ENCODE measurements at regions of chr2 and their contacts with region 1.

Region 1: DNA sequence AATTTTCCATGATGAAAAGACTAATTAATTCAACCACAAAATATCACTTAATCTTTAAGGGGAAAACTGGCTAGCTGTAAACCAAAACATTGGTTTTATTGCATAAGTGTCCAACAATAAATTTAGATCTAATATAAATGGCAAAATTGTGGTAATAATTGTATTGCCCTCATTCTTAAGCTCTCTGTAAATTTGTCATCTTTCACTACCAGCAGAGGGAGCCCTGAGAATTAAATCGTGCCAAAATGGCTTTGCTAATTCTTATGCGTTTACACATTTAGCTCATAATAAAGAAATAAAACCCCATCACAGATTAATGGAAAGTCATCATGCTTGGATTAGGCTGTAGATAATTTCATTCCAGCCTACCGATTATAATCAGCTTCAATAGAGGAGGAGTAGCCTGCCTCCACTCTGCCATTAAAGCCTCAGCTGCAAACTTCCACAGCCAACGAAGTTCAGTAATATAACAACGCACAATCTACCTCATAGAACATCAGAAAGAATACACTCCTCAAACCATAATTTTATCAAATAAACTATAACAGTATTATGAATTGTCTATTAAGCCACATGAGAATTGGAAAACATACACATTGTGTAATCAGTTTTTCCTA is 70.0 kb upstream of the ATP5MC3 start:
- DNase-seq: peak in 2 of 35 experiments; percentile 2 to 44
- ATAC-seq: no peak
- H3K4me3 ChIP-seq: no peak overlapping the region
- H3K4me3 Mint-ChIP-seq: no peak overlapping the region
- H3K27ac ChIP-seq: no peak overlapping the region
- H3K27ac Mint-ChIP-seq: no peak overlapping the region
- H3K4me1 ChIP-seq: no peaks in the 10 kb centered on the region
- H3K4me1 Mint-ChIP-seq: no peaks in the 10 kb centered on the region
- H3K27me3 ChIP-seq: peaks cover 0 to 2% of the 10 kb centered on the region in 2 experiments
- H3K27me3 Mint-ChIP-seq: peaks cover 23 to 31% of the 10 kb centered on the region in 2 donors

Region 2: DNA sequence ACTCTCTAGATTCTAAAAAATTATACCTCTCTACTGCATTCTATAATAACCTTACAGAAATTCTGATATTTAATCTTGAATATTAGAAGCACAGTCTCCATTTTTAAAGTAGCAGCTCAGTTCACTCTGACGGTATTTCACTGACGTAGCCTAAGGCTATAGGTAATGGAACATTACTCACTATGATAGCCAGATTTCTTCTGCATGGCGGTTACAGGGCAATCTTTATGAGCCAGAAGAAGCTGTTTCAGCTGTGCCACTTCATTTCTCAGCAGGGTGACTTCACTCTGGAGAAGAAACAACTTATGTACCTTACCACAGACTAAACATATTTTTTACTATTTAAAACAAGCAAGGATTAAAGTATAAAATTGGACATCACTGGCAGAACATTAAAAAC is 171.1 kb before region 1 on chr2:
- CTCF ChIA-PET with region 1: no interaction called
- POLR2A ChIA-PET with region 1: no interaction called
- DNase-seq: no peak
- ATAC-seq: no peak
- H3K4me3 ChIP-seq: no peak overlapping the region
- H3K4me3 Mint-ChIP-seq: no peak overlapping the region
- H3K27ac ChIP-seq: no peak overlapping the region
- H3K27ac Mint-ChIP-seq: no peak overlapping the region
- H3K4me1 ChIP-seq: no peaks in the 10 kb centered on the region
- H3K4me1 Mint-ChIP-seq: no peaks in the 10 kb centered on the region
- H3K27me3 ChIP-seq: no peaks in the 10 kb centered on the region
- H3K27me3 Mint-ChIP-seq: no peaks in the 10 kb centered on the region

Region 3: GRCh38 chr2:175318542-175318941 is 67.0 kb after region 1 on chr2:
- CTCF ChIA-PET with region 1: no interaction called
- POLR2A ChIA-PET with region 1: no interaction called
- DNase-seq: no peak
- ATAC-seq: no peak
- H3K4me3 ChIP-seq: no peak overlapping the region
- H3K4me3 Mint-ChIP-seq: no peak overlapping the region
- H3K27ac ChIP-seq: no peak overlapping the region
- H3K27ac Mint-ChIP-seq: no peak overlapping the region
- H3K4me1 ChIP-seq: no peaks in the 10 kb centered on the region
- H3K4me1 Mint-ChIP-seq: no peaks in the 10 kb centered on the region
- H3K27me3 ChIP-seq: no peaks in the 10 kb centered on the region
- H3K27me3 Mint-ChIP-seq: peaks cover 11 to 13% of the 10 kb centered on the region in 2 donors

Region 4: DNA sequence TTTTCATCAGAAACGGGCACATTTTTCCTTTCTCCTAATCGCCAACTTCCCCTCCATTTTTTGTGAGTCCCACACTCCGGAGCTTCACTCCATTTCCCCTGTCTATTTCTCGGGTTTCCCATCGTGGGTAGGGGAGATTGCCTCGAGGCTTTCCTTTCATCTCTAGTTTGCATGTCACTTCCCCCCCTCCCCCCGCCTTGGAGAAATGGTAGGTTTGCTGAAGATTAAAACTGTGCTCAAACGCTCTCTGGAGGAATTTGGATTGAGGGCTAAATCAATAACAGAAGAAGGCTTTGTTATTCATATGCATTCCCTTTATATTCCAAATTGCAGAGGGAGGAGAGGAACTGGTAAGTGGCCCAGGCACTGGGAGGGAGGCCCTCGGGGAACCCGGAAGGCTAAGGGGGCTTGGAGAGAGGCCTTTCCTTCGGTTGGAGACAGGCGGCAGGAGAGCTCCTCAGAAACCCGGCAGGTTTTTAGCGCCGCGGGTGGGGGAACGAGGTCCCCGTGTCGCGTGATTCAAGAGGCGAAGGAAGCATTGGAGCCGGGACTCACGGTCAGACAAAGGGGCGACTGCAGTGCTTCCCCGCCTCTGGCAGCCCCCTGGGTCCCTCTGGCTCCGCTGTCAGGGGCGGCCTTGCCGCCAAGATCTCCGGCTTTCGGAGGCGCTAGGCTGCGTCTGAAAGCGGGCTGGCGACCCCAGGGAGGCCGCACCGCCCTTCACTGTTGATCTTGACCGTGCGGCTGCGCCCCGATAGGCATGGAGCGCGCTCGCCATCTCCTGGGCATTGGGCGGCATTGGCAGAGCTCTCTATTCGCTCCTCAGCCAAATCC is 845.7 kb after region 1 on chr2:
- CTCF ChIA-PET with region 1: interaction called, 4 to 32 read pairs
- POLR2A ChIA-PET with region 1: no interaction called
- DNase-seq: peak in 27 of 35 experiments; percentile 21 to 75 (median 38)
- ATAC-seq: peak; percentile 68 to 81 (median 76)
- H3K4me3 ChIP-seq: peak overlapping the region; percentile 36 to 70
- H3K4me3 Mint-ChIP-seq: peak overlapping the region; percentile 66 to 75 (median 71)
- H3K27ac ChIP-seq: no peak overlapping the region
- H3K27ac Mint-ChIP-seq: peak overlapping the region in 1 of 2 donors; percentile 69
- H3K4me1 ChIP-seq: peaks cover 8 to 27% of the 10 kb centered on the region in 2 experiments
- H3K4me1 Mint-ChIP-seq: peaks cover 26 to 29% (median 27%) of the 10 kb centered on the region in 3 donors
- H3K27me3 ChIP-seq: peaks cover 30 to 81% of the 10 kb centered on the region in 2 experiments
- H3K27me3 Mint-ChIP-seq: peaks cover 80 to 88% of the 10 kb centered on the region in 2 donors

Region 5: DNA sequence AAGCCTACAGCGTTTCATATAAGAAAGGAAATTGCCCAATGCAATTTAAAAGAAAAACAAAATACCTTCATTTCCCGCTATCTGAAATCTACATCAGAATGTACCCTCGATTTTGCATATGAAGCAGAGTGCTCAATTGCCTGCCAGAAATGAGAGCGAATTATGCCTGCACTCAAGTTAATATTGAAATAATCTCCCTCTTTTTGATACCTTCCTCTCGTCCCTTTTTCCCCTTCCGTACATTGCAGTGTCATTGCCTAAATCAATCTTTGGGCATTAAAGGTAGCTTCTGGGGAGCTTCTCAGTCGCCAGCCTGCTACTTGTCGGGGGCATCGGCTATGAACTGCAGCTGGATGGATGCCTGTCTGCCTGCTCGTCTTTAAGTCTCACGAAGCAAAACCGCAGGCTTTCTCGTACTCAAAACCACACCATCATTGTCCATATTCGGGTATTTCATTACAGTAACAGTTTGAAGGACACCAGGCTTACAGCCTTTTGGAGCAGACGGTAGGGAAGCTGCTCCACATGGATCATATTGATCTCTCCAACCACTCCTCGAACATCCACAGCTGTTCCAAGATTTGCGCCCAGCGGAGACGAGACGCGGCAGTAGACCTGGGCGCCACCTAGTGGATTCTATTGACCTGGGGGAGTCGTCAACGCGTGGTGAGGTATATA is 1897.1 kb after region 1 on chr2:
- CTCF ChIA-PET with region 1: interaction called, 3 to 10 read pairs
- POLR2A ChIA-PET with region 1: no interaction called
- DNase-seq: peak; percentile 37 to 85 (median 64)
- ATAC-seq: peak; percentile 89 to 93 (median 91)
- H3K4me3 ChIP-seq: peak overlapping the region; percentile 47 to 57
- H3K4me3 Mint-ChIP-seq: peak overlapping the region; percentile 81 to 91 (median 84)
- H3K27ac ChIP-seq: no peak overlapping the region
- H3K27ac Mint-ChIP-seq: peak overlapping the region in 1 of 2 donors; percentile 63
- H3K4me1 ChIP-seq: peaks cover 8 to 9% of the 10 kb centered on the region in 2 experiments
- H3K4me1 Mint-ChIP-seq: peaks cover 12 to 17% (median 13%) of the 10 kb centered on the region in 3 donors
- H3K27me3 ChIP-seq: peaks cover 4 to 8% of the 10 kb centered on the region in 2 experiments
- H3K27me3 Mint-ChIP-seq: peaks cover 32 to 34% of the 10 kb centered on the region in 2 donors